ENCODE measurements at regions of chr16 and their contacts with region 1.

Region 1: GRCh38 chr16:70653809-70654771 is 7.7 kb downstream of the IL34 start:
- DNase-seq: peak; percentile 73 to 84 (median 83)
- ATAC-seq: peak; percentile 89
- H3K4me3 ChIP-seq: no peak overlapping the region
- H3K27ac ChIP-seq: no peak overlapping the region
- H3K4me1 ChIP-seq: peaks cover 4% of the 10 kb centered on the region
- H3K27me3 ChIP-seq: no peaks in the 10 kb centered on the region
- CTCF ChIP-seq: peak; percentile 66 to 96 (median 94)
- POLR2A ChIP-seq: no peak

Region 2: DNA sequence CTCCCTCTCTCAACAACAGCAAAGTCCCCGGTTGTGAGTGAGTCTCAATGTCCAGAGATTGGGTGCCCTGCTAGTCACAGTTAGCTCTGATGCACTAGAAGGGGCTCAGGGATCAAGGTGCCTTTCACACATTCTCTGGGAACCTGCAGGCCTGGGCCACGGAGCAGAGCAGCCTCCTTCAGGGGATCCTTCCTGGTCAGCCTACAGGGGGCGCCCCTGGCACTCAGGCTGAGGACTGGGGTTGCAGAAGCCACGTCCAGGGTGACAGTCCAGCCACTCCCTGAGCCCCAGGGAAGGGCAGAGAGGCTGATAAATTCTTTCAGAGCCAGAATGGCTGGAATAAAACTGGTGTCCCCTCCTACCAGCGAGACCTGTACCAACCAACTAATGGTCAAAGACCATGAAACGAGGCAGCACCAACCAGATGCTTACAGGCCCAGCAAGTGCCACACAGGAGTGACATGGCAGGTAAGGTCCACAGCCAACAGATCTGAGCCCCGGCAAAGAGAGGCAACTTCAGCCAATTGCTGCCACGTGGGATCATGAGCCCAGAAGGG is 258.7 kb before region 1 on chr16:
- intact Hi-C with region 1: loop called (anchors 10 kb)
- DNase-seq: peak; percentile 73 to 75 (median 74)
- ATAC-seq: peak; percentile 79
- H3K4me3 ChIP-seq: no peak overlapping the region
- H3K27ac ChIP-seq: no peak overlapping the region
- H3K4me1 ChIP-seq: no peaks in the 10 kb centered on the region
- H3K27me3 ChIP-seq: no peaks in the 10 kb centered on the region
- CTCF ChIP-seq: peak; percentile 52 to 77 (median 71)
- POLR2A ChIP-seq: no peak

Region 3: GRCh38 chr16:70444249-70445063 is 209.6 kb before region 1 on chr16:
- intact Hi-C with region 1: no loop called
- DNase-seq: no peak
- ATAC-seq: peak; percentile 73
- H3K4me3 ChIP-seq: no peak overlapping the region
- H3K27ac ChIP-seq: peak overlapping the region in 1 of 4 donors; percentile 28
- H3K4me1 ChIP-seq: peaks cover 9% of the 10 kb centered on the region
- H3K27me3 ChIP-seq: no peaks in the 10 kb centered on the region
- CTCF ChIP-seq: no peak
- POLR2A ChIP-seq: no peak

Region 4: DNA sequence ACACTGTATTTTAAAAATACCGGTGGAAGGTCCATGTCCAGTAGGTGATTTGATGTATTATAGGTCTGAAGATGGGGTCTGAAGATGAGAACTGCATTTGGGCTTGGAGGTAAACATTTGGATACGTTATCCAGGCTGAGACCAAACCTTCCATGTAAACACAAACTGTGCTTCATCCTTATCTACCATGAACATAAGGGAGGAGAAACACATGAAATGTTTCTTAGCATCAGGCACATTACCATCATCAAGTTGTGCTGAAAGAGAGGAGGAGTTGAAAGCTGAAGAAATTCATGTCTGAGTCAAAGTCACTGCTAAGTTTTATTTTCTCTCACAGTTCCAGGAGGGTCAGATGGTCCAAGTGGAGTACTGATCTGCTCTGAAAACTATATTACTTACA is 119.1 kb before region 1 on chr16:
- intact Hi-C with region 1: loop called (anchors 5 kb)
- DNase-seq: no peak
- ATAC-seq: no peak
- H3K4me3 ChIP-seq: no peak overlapping the region
- H3K27ac ChIP-seq: no peak overlapping the region
- H3K4me1 ChIP-seq: no peaks in the 10 kb centered on the region
- H3K27me3 ChIP-seq: no peaks in the 10 kb centered on the region
- CTCF ChIP-seq: no peak
- POLR2A ChIP-seq: no peak

Region 5: GRCh38 chr16:70610273-70611223 is 43.5 kb before region 1 on chr16:
- intact Hi-C with region 1: no loop called
- DNase-seq: peak in 3 of 4 donors; percentile 28 to 53 (median 33)
- ATAC-seq: peak; percentile 30
- H3K4me3 ChIP-seq: no peak overlapping the region
- H3K27ac ChIP-seq: no peak overlapping the region
- H3K4me1 ChIP-seq: peaks cover 11% of the 10 kb centered on the region
- H3K27me3 ChIP-seq: no peaks in the 10 kb centered on the region
- CTCF ChIP-seq: no peak
- POLR2A ChIP-seq: no peak

Measured in body of pancreas (tissue), 4 donors.